Dorsolateral prefrontal cortex (tissue), 120 donors: ENCODE measurements at regions of chr18 and their contacts with region 1.

Region 1: DNA sequence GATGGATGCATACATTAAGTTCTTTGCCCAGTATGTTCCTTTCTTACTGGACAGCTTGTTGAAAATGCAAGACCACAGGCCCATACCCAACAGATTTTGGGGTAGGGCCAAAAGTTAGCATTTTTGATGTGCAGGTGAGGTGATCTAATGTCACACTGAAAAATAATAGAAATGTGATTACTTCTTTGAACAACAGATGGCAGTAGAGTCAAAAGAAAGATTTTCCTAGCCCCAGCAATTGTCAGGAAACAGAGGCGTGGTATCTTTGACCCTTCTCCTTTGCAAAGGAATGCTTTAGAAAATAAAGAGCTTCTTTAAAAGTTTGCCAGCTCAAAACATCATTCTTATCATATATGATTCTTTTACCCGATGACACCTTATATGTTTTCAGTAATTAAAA is 343.6 kb upstream of the SYT4 start:
- DNase-seq: no peak
- H3K4me3 ChIP-seq: no peak overlapping the region
- H3K27ac ChIP-seq: no peak overlapping the region
- H3K27me3 ChIP-seq: peaks cover 0 to 7% (median 0%) of the 10 kb centered on the region in 45 donors
- CTCF ChIP-seq: peak; percentile 28 to 83 (median 66)

Region 2: GRCh38 chr18:43372773-43373172 is 248.2 kb before region 1 on chr18:
- intact Hi-C with region 1: no loop called
- DNase-seq: no peak
- H3K4me3 ChIP-seq: no peak overlapping the region
- H3K27ac ChIP-seq: no peak overlapping the region
- H3K27me3 ChIP-seq: peaks cover 0 to 4% (median 0%) of the 10 kb centered on the region in 45 donors
- CTCF ChIP-seq: no peak

Region 3: DNA sequence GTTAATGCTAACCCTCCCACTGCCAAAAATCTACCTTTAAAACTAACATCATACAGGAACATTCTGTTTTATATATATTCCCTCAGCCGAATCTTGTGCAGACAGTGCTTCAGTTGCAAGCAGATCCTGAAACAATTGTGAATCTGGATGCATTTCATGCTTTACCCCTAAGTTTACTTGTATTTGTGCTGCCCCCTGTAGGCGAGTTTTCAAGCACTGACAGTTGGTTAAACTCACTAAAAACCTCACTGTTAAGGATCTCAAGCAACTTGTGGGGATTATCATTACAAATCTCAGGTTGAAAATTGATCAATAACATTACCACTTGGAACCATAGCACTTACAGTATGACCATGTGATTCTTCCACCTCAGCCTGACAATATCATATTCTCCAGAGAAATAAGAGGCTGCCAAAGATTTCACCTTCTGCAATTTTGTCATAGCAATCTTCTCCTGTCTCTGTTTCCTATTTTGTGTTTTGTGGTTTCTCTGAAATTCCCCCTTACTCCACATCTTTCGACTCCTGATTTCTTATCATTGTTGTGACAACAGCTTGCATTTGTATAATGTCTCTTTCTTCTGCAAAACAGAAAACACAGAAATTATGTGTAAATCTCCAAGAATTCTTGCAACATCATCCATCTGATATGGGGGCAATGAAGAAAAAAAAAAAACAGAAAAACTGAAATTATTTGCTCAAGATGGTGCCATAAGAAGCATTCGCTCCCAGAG is 705.1 kb after region 1 on chr18:
- intact Hi-C with region 1: loop called in 1 of 2 experiments (anchors 10 kb)
- DNase-seq: peak in 1 of 10 donors; percentile 34
- H3K4me3 ChIP-seq: no peak overlapping the region
- H3K27ac ChIP-seq: no peak overlapping the region
- H3K27me3 ChIP-seq: peaks cover 0 to 4% (median 0%) of the 10 kb centered on the region in 45 donors
- CTCF ChIP-seq: peak; percentile 19 to 65 (median 43)